Transverse colon (tissue), 4 donors: ENCODE measurements at regions of chr1 and their contacts with region 1.

Region 1: DNA sequence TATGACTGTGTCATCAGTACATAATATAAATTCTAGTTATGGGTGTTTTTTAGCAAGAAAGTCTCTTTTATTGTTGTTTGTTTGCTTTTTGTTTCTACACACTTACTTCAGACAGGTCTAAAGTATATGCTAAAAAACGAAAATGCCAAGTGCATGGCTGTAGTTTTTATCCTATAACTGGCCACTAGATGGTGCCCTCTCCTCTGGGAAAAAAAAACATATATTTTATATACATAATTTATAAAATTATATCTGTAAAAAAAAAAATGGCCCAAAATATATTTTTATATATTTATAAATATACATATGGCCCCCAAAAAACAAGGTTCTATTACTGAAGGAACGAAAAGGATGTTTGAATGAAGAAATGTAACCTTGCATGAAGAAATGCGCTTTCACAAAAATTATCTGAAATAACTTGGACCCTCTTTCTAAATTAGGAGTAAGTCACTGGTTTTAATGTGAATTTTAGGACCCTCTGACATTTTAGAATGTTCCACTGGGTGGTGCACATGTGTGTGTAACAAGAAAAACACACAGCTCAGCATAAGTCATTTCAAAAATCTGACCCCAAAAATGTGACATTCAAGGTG is 93.5 kb downstream of the TTLL7 start:
- DNase-seq: no peak
- H3K4me3 ChIP-seq: no peak overlapping the region
- H3K27ac ChIP-seq: no peak overlapping the region
- H3K4me1 ChIP-seq: peaks cover 0 to 15% (median 0%) of the 10 kb centered on the region in 4 donors
- H3K27me3 ChIP-seq: no peaks in the 10 kb centered on the region
- CTCF ChIP-seq: peak; percentile 45 to 75 (median 64)
- EP300 ChIP-seq: no peak
- POLR2A ChIP-seq: no peak

Region 2: DNA sequence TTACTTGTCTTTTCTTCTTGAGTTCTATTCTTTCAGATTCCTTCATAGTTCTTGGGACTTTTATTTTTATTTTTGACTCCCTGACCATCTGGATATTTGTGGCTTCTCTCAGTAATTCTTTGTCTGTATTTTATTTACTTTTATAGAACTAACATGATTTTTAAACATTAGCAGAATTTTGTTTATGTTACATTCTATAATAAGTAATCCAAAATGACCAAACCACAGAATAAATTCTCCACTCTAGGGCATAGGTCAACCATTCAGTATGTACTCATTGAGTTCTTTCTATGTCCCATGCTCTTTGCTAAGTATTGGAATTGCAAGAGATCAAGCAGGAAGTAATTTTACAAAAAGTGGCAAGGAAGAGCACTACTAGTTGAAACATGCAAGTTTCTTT is 875.5 kb before region 1 on chr1:
- in situ Hi-C with region 1: no loop called
- intact Hi-C with region 1: no loop called
- DNase-seq: no peak
- H3K4me3 ChIP-seq: no peak overlapping the region
- H3K27ac ChIP-seq: no peak overlapping the region
- H3K4me1 ChIP-seq: no peaks in the 10 kb centered on the region
- H3K27me3 ChIP-seq: no peaks in the 10 kb centered on the region
- CTCF ChIP-seq: no peak
- EP300 ChIP-seq: no peak
- POLR2A ChIP-seq: no peak

Region 3: DNA sequence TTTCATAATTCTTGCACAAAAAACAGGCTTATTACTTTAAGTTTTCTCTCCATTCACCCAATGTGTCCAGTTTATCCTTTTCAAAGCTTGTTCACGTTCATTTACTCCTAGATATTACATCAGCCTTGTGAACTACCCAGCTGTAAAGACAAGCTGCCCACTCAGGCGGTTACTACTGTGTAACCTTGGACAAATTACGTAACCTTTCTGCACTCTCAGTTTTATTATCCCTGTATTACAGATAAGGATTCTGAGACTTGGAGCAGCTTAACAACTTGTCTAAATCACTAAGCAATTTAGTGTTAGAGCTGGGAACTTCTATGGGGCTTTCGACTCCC is 1008.1 kb after region 1 on chr1:
- in situ Hi-C with region 1: loop called in 1 of 4 experiments (anchors 25 kb)
- intact Hi-C with region 1: no loop called
- DNase-seq: peak; percentile 42
- H3K4me3 ChIP-seq: no peak overlapping the region
- H3K27ac ChIP-seq: peak overlapping the region in 2 of 4 donors; percentile 8 to 38
- H3K4me1 ChIP-seq: peaks cover 0 to 11% (median 0%) of the 10 kb centered on the region in 4 donors
- H3K27me3 ChIP-seq: no peaks in the 10 kb centered on the region
- CTCF ChIP-seq: no peak
- EP300 ChIP-seq: no peak
- POLR2A ChIP-seq: no peak